Dendritic cell treated with granulocyte-macrophage colony-stimulating factor and Interleukin-4, amounts not matched to agents 40 ng/mL and 50 ng/mL, for 4 days (primary cell): ENCODE measurements at regions of chr1 and their contacts with region 1.

Region 1: GRCh38 chr1:183804881-183805841 is at the start of gene RGL1:
- H3K4me3 Mint-ChIP-seq: peak within 1 kb of the TSS; percentile 94
- H3K27ac Mint-ChIP-seq: peak within 1 kb of the TSS; percentile 99
- H3K4me1 Mint-ChIP-seq: peaks cover 43% of the 10 kb centered on the region
- H3K27me3 Mint-ChIP-seq: peaks cover 3% of the 10 kb centered on the region

Region 2: GRCh38 chr1:183635606-183636333 is 169.4 kb before region 1 on chr1 and contains the start of gene ARPC5:
- intact Hi-C with region 1: loop called (anchors 5 kb)
- H3K4me3 Mint-ChIP-seq: peak within 1 kb of the TSS; percentile 99
- H3K27ac Mint-ChIP-seq: peak within 1 kb of the TSS; percentile 98
- H3K4me1 Mint-ChIP-seq: peaks cover 27% of the 10 kb centered on the region
- H3K27me3 Mint-ChIP-seq: peaks cover 2% of the 10 kb centered on the region

Region 3: GRCh38 chr1:183764981-183765380 is 40.2 kb before region 1 on chr1:
- intact Hi-C with region 1: loop called (anchors 5 kb)
- H3K4me3 Mint-ChIP-seq: no peak overlapping the region
- H3K27ac Mint-ChIP-seq: no peak overlapping the region
- H3K4me1 Mint-ChIP-seq: peaks cover under 1% of the 10 kb centered on the region
- H3K27me3 Mint-ChIP-seq: no peaks in the 10 kb centered on the region

Region 4: GRCh38 chr1:184212649-184213314 is 407.6 kb after region 1 on chr1:
- intact Hi-C with region 1: no loop called
- H3K4me3 Mint-ChIP-seq: no peak overlapping the region
- H3K27ac Mint-ChIP-seq: peak overlapping the region; percentile 83
- H3K4me1 Mint-ChIP-seq: peaks cover 23% of the 10 kb centered on the region
- H3K27me3 Mint-ChIP-seq: no peaks in the 10 kb centered on the region

Region 5: DNA sequence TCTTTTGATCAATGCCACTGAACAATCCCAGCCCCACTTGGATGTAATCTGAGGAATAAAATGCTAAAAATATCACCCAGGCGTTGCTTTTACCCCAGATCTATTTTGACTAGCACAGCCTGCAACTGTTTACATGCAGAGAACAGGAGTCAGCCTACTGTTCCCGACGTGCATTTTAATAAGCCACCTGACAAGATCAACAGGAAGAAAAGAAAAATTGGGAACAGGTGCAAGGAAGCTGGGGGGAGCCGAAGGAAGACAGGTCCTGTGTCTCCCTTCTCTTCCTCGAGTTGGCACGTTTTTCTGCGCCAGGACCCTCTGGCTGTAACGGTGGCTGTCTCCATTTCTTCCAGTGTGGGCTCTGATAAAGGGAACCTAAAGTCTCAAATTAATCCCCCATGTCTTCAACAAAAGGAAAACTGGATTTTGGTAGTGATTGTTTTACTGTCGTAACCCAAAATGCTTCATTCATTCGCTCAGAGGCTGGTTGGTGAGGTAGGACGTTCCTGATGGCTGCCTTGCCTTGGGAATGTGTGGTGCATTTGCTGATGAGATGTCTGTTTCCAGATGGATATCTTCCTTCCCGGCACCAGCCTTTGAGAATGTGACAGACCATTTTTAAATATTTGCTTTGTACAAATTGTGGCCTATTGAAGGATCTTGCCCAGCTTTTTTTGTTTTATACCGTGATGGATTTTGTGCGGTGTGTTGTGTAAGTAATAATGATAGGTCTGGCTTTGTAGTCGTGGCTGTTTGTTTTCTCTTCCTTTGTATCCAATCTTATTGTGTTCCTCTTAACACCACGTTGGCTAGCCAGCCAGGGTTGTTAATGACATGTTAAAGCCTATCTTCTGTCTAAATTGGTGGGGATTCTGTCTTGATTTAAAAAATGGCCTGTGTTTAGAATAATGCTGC is 699.1 kb after region 1 on chr1:
- intact Hi-C with region 1: no loop called
- H3K4me3 Mint-ChIP-seq: no peak overlapping the region
- H3K27ac Mint-ChIP-seq: no peak overlapping the region
- H3K4me1 Mint-ChIP-seq: peaks cover 4% of the 10 kb centered on the region
- H3K27me3 Mint-ChIP-seq: no peaks in the 10 kb centered on the region